Activated CD4-positive, alpha-beta T cell treated with anti-CD3 and anti-CD28 coated beads, Interleukin-2, amount 10 ng/mL, durations not matched to agents 24 days and 14 days (primary cell): ENCODE measurements at regions of chr17 and their contacts with region 1.

Region 1: DNA sequence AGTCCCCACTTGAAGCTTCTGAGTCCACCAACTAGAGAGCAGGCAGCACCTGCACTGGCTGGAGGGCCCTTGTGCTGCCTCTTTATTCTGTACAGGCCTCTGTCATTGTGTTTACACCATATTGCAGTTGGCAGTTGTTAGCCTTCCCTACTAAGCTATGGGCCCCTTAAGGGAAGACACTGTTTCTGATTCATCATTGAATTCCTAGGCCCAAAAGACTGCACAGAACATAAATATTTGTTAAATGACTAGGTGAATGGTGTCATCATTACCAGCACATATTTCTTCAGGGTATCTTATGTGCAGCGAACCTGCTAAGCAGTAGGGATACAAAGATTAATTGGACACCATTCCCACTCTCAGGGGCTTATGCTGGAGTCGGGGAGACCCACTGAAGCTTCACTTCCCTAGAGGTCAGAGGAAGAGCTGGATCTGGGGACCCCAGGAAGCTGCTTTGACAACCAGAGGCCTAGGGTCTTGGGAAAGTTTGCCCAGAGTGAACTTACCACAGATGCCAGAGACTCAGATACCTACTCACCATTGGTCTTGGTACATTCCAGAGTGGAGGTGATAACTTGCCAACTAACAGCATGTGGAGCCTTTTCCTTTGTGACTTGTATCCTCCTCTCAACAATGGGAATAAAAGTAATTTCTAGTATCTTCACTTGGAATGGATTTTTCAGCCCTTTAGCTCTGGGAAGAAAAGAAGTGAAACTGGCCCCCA is 28.7 kb upstream of the DDX52 start:
- DNase-seq: no peak
- H3K4me3 Mint-ChIP-seq: no peak overlapping the region
- H3K27ac Mint-ChIP-seq: no peak overlapping the region
- H3K4me1 Mint-ChIP-seq: no peaks in the 10 kb centered on the region
- H3K27me3 Mint-ChIP-seq: peaks cover 11% of the 10 kb centered on the region

Region 2: DNA sequence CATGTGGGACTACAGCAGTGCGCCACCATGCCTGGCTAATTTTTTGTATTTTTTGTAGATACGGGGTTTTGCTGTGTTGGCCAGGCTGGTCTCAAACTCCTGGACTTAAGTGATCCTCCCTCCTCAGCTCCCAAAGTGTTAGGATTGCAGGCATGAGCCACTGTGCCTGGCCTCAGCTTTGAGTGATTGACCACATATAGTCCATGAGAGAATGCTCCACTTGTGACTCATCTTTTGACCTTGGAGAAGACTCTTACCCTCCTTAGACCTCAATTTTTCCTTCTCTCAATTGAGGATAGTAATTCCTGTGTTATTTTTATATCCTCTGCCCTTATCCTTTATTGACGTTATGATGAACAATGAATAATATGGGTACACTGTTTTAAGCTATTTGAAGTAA is 213.2 kb before region 1 on chr17:
- intact Hi-C with region 1: no loop called
- DNase-seq: no peak
- H3K4me3 Mint-ChIP-seq: no peak overlapping the region
- H3K27ac Mint-ChIP-seq: no peak overlapping the region
- H3K4me1 Mint-ChIP-seq: peaks cover 9% of the 10 kb centered on the region
- H3K27me3 Mint-ChIP-seq: no peaks in the 10 kb centered on the region

Region 3: GRCh38 chr17:37661400-37662014 is 10.5 kb before region 1 on chr17:
- intact Hi-C with region 1: no loop called
- DNase-seq: no peak
- H3K4me3 Mint-ChIP-seq: no peak overlapping the region
- H3K27ac Mint-ChIP-seq: no peak overlapping the region
- H3K4me1 Mint-ChIP-seq: no peaks in the 10 kb centered on the region
- H3K27me3 Mint-ChIP-seq: peaks cover 26% of the 10 kb centered on the region

Region 4: GRCh38 chr17:37720989-37721388 is 49.0 kb after region 1 on chr17:
- intact Hi-C with region 1: loop called (anchors 5 kb)
- DNase-seq: no peak
- H3K4me3 Mint-ChIP-seq: no peak overlapping the region
- H3K27ac Mint-ChIP-seq: no peak overlapping the region
- H3K4me1 Mint-ChIP-seq: no peaks in the 10 kb centered on the region
- H3K27me3 Mint-ChIP-seq: peaks cover 29% of the 10 kb centered on the region